Heart right ventricle (tissue), 16 donors: ENCODE measurements at regions of chr4 and their contacts with region 1.

Region 1: GRCh38 chr4:186297013-186297645 is 31.1 kb downstream of the F11 start:
- DNase-seq: no peak
- ATAC-seq: no peak
- H3K4me3 ChIP-seq: no peak overlapping the region
- H3K27ac ChIP-seq: no peak overlapping the region
- H3K4me1 ChIP-seq: peaks cover 0 to 10% (median 0%) of the 10 kb centered on the region in 9 donors
- H3K27me3 ChIP-seq: peaks cover 6 to 82% (median 47%) of the 10 kb centered on the region in 7 donors
- CTCF ChIP-seq: peak; percentile 42 to 75 (median 65)

Region 2: GRCh38 chr4:186472948-186473347 is 175.8 kb after region 1 on chr4:
- intact Hi-C with region 1: loop called in 1 of 10 experiments (anchors 5 kb)
- DNase-seq: no peak
- ATAC-seq: no peak
- H3K4me3 ChIP-seq: no peak overlapping the region
- H3K27ac ChIP-seq: no peak overlapping the region
- H3K4me1 ChIP-seq: no peaks in the 10 kb centered on the region
- H3K27me3 ChIP-seq: peaks cover 0 to 23% (median 0%) of the 10 kb centered on the region in 7 donors
- CTCF ChIP-seq: peak; percentile 37 to 65 (median 58)

Region 3: DNA sequence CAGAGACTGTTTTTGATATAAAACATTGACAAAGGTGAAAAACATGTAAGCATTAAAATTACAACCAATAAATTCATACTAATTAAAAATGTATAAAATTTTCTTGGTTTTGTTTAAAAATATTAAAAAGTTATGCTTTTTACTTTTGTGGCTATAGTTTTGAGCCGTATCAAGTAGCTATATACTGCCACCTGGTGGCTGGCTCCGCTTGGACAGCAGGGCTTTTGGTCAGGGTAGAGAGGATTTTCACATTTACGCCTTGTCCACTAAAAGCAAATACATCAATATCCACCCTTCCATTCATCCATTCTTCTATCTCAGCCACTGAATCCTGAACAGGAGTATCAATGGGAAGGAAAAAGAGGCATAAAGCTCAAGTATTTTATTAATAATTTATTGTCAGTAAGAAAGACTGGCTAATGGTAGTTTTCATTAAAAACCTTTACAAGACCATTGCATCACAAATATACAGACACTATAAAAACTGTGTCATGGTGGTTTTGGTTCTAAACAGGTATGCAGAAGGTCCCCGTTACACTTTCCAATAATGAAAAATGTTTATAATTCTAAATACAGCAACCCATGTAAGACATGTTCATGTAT is 290.4 kb after region 1 on chr4:
- intact Hi-C with region 1: loop called (anchors 1 to 5 kb)
- DNase-seq: peak; percentile 62 to 63
- ATAC-seq: peak in 3 of 8 donors; percentile 61 to 75 (median 63)
- H3K4me3 ChIP-seq: no peak overlapping the region
- H3K27ac ChIP-seq: no peak overlapping the region
- H3K4me1 ChIP-seq: peaks cover 0 to 25% (median 6%) of the 10 kb centered on the region in 9 donors
- H3K27me3 ChIP-seq: no peaks in the 10 kb centered on the region
- CTCF ChIP-seq: peak; percentile 74 to 94 (median 92)